ENCODE measurements at regions of chr1 and their contacts with region 1.

Region 1: DNA sequence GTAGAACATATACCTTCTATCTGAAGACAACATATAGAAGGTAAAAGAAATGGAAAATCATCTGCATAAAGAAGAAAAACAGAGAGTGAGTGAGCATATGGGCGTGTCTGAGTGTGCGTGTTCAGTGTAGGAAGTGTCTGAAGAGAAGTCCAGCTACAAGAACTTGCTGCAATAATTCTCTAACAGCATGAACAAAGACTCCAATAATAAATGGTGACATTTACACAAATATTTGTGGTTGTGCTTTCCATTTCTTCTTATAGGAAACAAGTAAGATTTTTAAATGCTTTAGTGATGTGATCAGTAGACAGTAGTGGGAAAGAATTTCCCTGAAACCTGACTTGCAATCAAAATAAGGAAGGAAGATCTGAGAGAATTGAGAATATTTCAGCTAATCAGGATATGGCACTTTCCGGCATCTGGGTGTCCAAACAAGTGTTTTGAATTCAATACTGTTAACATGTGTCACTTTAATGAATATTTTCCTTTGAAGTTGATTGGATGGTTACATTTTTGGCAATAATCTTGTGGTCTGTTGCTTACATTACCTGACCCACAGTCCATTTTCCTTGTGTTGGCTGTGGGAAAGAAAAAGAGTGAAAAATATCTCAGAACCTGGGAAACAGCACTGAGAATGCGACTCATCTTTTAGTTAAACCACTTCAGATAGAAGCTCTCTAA is 154.0 kb downstream of the TGFB2 start:
- DNase-seq: peak; percentile 63
- H3K4me3 Mint-ChIP-seq: peak overlapping the region; percentile 59
- H3K27ac Mint-ChIP-seq: peak overlapping the region; percentile 93
- H3K4me1 Mint-ChIP-seq: peaks cover 35% of the 10 kb centered on the region
- H3K27me3 Mint-ChIP-seq: no peaks in the 10 kb centered on the region
- CTCF ChIP-seq: no peak

Region 2: GRCh38 chr1:218459878-218460711 is 39.1 kb before region 1 on chr1:
- CTCF ChIA-PET with region 1: no interaction called
- POLR2A ChIA-PET with region 1: interaction called, 4 read pairs
- intact Hi-C with region 1: loop called (anchors 2 kb)
- DNase-seq: peak; percentile 99
- H3K4me3 Mint-ChIP-seq: peak overlapping the region; percentile 34
- H3K27ac Mint-ChIP-seq: peak overlapping the region; percentile 85
- H3K4me1 Mint-ChIP-seq: peaks cover 38% of the 10 kb centered on the region
- H3K27me3 Mint-ChIP-seq: no peaks in the 10 kb centered on the region
- CTCF ChIP-seq: no peak

Region 3: GRCh38 chr1:218488531-218488930 is 10.6 kb before region 1 on chr1:
- CTCF ChIA-PET with region 1: interaction called, 3 read pairs
- POLR2A ChIA-PET with region 1: interaction called, 12 read pairs
- intact Hi-C with region 1: no loop called
- DNase-seq: no peak
- H3K4me3 Mint-ChIP-seq: no peak overlapping the region
- H3K27ac Mint-ChIP-seq: no peak overlapping the region
- H3K4me1 Mint-ChIP-seq: peaks cover 18% of the 10 kb centered on the region
- H3K27me3 Mint-ChIP-seq: no peaks in the 10 kb centered on the region
- CTCF ChIP-seq: no peak

Region 4: GRCh38 chr1:218537122-218537904 is 38.2 kb after region 1 on chr1:
- CTCF ChIA-PET with region 1: interaction called, 3 read pairs
- POLR2A ChIA-PET with region 1: interaction called, 28 read pairs
- intact Hi-C with region 1: loop called (anchors 1 kb)
- DNase-seq: peak; percentile 74
- H3K4me3 Mint-ChIP-seq: peak overlapping the region; percentile 5
- H3K27ac Mint-ChIP-seq: peak overlapping the region; percentile 98
- H3K4me1 Mint-ChIP-seq: peaks cover 36% of the 10 kb centered on the region
- H3K27me3 Mint-ChIP-seq: no peaks in the 10 kb centered on the region
- CTCF ChIP-seq: no peak